Gastrocnemius medialis (tissue), 4 donors: ENCODE measurements at regions of chr10 and their contacts with region 1.

Region 1: GRCh38 chr10:88114368-88114767 is 250.9 kb downstream of the PTEN start:
- DNase-seq: peak in 1 of 2 donors; percentile 40
- ATAC-seq: peak in 1 of 2 donors; percentile 45
- H3K4me3 ChIP-seq: no peak overlapping the region
- H3K27ac ChIP-seq: no peak overlapping the region
- H3K4me1 ChIP-seq: peaks cover 0 to 4% of the 10 kb centered on the region in 2 donors
- H3K27me3 ChIP-seq: no peaks in the 10 kb centered on the region
- CTCF ChIP-seq: peak; percentile 21 to 62 (median 47)
- POLR2A ChIP-seq: no peak

Region 2: DNA sequence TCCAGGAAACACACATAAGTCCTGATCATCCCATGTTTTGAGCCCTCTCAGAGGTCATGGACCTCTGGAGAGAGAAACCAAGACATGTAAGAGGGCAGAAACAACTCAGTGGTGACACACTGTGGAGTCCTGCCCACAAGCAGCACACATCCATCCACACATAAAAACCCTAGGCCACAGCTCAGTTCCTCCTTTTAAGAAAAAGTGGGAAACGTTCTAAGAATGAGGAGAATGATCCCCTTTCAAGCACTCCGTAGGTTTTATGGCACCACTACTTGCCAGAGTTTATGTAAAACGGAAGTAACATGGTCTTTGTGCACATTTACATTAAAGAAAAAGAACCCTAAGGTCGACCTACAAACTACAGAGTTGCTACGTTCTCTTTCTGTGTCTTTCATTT is 316.3 kb before region 1 on chr10:
- in situ Hi-C with region 1: no loop called
- intact Hi-C with region 1: no loop called
- DNase-seq: no peak
- ATAC-seq: no peak
- H3K4me3 ChIP-seq: no peak overlapping the region
- H3K27ac ChIP-seq: no peak overlapping the region
- H3K4me1 ChIP-seq: peaks cover 0 to 8% of the 10 kb centered on the region in 2 donors
- H3K27me3 ChIP-seq: no peaks in the 10 kb centered on the region
- CTCF ChIP-seq: no peak
- POLR2A ChIP-seq: no peak

Region 3: DNA sequence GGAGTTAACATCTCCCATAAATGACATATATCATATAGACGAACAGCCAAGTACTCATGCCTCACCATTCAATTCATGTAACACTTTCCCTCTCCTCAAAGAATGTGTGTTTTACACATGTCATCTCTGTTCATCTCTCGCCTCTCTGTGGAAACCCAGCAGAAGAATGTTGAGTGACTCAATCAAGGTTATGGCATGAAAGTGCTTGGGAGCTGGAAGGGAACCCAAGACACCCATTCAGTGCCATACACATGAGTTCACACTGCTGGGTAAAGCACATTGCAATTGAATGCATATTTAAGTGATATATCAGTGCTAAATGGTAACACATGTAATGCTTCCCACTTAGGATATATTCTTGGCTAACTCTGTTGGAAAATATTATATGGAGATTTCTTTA is 72.0 kb after region 1 on chr10:
- in situ Hi-C with region 1: no loop called
- intact Hi-C with region 1: no loop called
- DNase-seq: no peak
- ATAC-seq: no peak
- H3K4me3 ChIP-seq: no peak overlapping the region
- H3K27ac ChIP-seq: no peak overlapping the region
- H3K4me1 ChIP-seq: no peaks in the 10 kb centered on the region
- H3K27me3 ChIP-seq: no peaks in the 10 kb centered on the region
- CTCF ChIP-seq: no peak
- POLR2A ChIP-seq: no peak

Region 4: DNA sequence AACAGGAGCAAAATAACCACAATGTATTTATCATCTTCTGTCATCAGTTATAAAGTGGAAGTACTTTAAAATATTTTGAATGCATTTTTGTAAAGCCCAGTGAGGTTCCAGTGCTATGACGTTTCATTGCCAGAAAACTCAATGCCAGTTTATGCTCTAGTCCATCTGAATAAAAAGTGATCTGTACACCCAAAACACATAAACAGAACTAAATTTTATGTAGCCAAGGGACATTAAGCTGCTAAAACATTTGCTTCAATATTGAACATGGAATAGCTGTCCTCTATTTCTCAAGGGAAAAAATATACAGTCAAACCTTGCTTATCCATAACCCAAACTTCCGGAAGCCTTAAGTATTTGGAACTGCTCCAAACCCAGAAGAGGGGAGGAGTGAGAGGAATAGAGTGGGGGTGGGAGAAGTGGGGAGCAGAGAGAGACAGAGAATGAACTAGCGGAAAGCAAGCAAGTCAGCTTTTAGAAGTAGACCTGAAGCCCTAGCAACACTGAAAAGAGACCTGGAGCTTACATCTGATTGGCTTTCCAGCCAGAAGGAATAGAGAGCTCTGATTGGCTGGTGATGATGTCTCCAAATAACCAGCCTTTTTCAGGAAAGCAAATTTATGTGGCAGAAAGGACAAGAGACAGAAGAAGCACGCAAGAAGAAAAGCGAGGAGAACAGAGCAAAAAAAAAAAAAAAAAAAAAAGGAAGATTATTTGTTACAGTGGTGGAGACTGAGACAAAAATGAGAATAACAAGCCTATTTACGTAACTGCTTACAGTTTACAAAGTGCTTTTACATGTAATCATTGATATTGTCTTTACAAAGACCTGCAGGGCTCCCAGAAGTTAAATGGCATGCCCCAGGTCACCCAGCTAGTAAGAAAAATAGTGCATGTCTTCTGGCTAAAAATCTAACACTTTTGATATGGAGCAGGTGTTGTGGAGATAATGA is 272.7 kb after region 1 on chr10:
- in situ Hi-C with region 1: no loop called
- intact Hi-C with region 1: loop called (anchors 5 kb)
- DNase-seq: peak; percentile 16 to 18
- ATAC-seq: peak; percentile 75 to 76
- H3K4me3 ChIP-seq: peak overlapping the region in 3 of 4 donors; percentile 16 to 30 (median 29)
- H3K27ac ChIP-seq: peak overlapping the region; percentile 22 to 56 (median 41)
- H3K4me1 ChIP-seq: peaks cover 12 to 20% of the 10 kb centered on the region in 2 donors
- H3K27me3 ChIP-seq: no peaks in the 10 kb centered on the region
- CTCF ChIP-seq: no peak
- POLR2A ChIP-seq: peak in 1 of 2 donors; percentile 26